ENCODE measurements at regions of chr1 and their contacts with region 1.

Region 1: GRCh38 chr1:111720977-111721786 is 18.0 kb downstream of the INKA2 start:
- DNase-seq: no peak
- H3K4me3 ChIP-seq: no peak overlapping the region
- CTCF ChIP-seq: no peak

Region 2: GRCh38 chr1:111690306-111690617 is 30.9 kb before region 1 on chr1:
- CTCF ChIA-PET with region 1: interaction called, 31 read pairs
- POLR2A ChIA-PET with region 1: no interaction called
- DNase-seq: peak; percentile 76
- H3K4me3 ChIP-seq: no peak overlapping the region
- CTCF ChIP-seq: no peak

Region 3: DNA sequence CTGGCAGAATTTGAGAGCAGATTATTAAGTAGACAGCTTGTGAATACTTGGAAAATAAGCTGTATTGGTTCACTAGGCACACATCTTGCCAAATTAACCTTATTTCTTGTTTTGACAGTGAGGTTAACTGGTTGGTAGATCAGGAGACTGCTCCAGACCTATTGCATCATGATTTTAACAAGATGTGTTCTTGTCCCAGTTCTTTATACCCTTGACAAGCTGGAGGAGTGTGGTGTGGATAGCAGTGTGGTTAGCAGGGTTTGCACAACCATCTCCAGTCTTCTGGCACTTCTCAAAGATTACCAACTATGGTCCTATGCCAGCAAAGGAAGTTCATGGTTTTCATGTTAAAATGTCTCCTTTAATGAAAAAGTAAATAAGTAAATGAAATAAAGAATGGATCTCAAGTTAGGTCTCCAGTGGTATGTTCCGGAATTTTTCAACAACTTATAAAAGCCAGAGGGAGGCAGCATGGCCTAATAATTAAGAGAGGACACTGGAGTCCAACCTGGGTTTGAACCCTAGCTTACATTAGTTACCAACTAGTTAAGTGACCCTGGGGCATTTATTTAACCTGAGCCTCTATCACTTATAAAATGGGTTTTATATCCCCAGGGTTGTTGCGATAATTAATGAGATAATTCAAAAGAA is 68.6 kb after region 1 on chr1:
- CTCF ChIA-PET with region 1: interaction called, 10 read pairs
- POLR2A ChIA-PET with region 1: no interaction called
- DNase-seq: no peak
- H3K4me3 ChIP-seq: no peak overlapping the region
- CTCF ChIP-seq: no peak